ENCODE measurements at regions of chrX and their contacts with region 1.

Region 1: DNA sequence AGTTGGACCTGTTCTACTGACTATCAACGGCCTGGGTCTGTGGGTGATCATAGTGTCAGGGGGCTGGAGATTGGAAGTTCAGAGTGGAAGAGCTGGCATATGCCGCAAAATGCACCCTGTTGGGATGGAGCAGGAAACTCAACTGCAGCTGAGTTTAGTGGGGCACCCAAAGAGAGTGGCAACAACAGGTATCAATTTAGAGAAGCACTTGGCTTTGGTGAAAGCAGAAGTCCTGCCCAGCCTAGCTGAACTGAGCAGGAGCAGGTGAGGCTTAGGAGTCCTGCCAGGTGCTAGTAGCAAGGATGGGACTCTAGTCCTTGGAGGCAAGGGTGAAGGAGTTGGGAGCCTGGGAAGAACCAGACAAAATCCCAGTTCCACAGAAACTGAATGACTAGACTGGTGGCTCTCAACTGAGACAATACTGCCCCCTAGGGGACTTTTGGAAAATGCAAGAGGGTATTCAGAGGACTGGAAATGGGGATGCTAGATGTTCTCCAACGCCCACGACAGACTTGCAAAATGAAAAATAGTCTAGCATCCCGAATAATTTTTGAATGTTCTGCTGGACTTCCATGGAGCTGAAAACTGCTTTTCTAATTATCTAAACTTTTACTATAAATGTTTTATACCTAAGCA is 49.4 kb downstream of the RTL9 start:
- DNase-seq: peak in 1 of 2 donors; percentile 23
- ATAC-seq: peak; percentile 83 to 84
- H3K4me3 ChIP-seq: no peak overlapping the region
- H3K27ac ChIP-seq: no peak overlapping the region
- H3K4me1 ChIP-seq: no peaks in the 10 kb centered on the region
- H3K27me3 ChIP-seq: no peaks in the 10 kb centered on the region
- CTCF ChIP-seq: peak; percentile 33 to 80 (median 69)
- POLR2A ChIP-seq: no peak

Region 2: DNA sequence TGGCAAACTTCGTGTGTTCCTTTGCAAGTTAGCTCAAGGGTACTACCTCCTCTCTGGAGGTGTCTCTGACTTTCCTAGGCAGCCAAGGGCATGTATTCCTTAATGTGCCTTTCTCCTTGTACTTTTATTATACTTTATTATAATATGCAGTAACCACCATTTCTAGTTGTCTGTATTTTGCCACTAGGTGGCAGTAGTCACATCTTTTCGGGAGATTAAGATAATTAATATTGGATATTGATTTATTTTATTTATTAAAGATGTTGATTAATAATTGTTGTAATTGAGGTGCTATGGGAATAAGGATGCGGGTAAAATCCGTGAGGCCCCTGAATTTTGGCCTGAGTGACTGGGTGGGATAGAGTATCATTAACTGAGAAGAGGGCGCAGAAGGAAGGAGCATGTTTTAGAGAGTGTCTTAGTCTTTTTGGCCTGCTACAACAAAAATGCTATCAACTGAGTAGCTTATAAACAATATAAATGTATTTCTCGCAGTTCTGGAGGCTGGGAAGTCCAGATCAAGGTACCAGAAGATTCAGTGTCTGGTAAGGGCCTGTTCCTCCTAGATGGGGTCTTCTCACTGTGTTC is 251.8 kb before region 1 on chrX:
- in situ Hi-C with region 1: loop called (anchors 5 to 10 kb)
- intact Hi-C with region 1: loop called (anchors 1 kb)
- DNase-seq: no peak
- ATAC-seq: no peak
- H3K4me3 ChIP-seq: no peak overlapping the region
- H3K27ac ChIP-seq: no peak overlapping the region
- H3K4me1 ChIP-seq: peaks cover 8 to 16% of the 10 kb centered on the region in 2 donors
- H3K27me3 ChIP-seq: no peaks in the 10 kb centered on the region
- CTCF ChIP-seq: peak in 2 of 5 experiments; percentile 27 to 66
- POLR2A ChIP-seq: no peak

Region 3: DNA sequence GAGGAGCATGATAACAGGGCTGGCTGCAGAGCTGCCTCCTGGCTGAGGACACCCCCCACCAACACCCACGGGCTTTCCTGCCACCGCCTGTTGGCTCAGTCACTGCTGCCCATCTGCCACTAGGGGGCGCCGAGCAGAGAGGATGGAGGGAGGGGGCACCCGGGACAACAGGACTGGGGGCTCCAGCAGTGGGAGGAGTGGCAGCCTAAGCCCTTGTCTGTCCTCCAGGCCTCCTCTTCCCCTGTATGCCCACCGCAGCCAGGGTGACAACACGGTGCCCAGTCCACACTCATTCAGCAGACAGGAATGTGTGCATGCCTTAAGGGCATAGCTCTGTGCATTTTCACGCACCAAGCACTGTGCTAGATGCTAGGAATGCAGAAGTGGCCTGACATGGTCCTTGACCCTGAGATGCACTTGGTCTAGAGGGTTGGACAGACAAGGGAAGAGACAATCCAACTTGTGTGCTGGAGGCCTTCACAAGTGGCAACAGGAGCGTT is 240.0 kb before region 1 on chrX:
- in situ Hi-C with region 1: loop called in 1 of 4 experiments (anchors 5 kb)
- intact Hi-C with region 1: no loop called
- DNase-seq: no peak
- ATAC-seq: no peak
- H3K4me3 ChIP-seq: no peak overlapping the region
- H3K27ac ChIP-seq: no peak overlapping the region
- H3K4me1 ChIP-seq: peaks cover 0 to 8% of the 10 kb centered on the region in 2 donors
- H3K27me3 ChIP-seq: no peaks in the 10 kb centered on the region
- CTCF ChIP-seq: peak in 4 of 5 experiments; percentile 13 to 57 (median 40)
- POLR2A ChIP-seq: no peak

Region 4: GRCh38 chrX:110317820-110318658 is 90.0 kb before region 1 on chrX and contains the start of gene AMMECR1:
- in situ Hi-C with region 1: no loop called
- intact Hi-C with region 1: loop called (anchors 5 kb)
- DNase-seq: peak; percentile 44 to 72
- ATAC-seq: peak; percentile 90
- H3K4me3 ChIP-seq: peak within 1 kb of the TSS; percentile 67 to 85 (median 76)
- H3K27ac ChIP-seq: peak within 1 kb of the TSS; percentile 83 to 92 (median 88)
- H3K4me1 ChIP-seq: peaks cover 6 to 7% of the 10 kb centered on the region in 2 donors
- H3K27me3 ChIP-seq: no peaks in the 10 kb centered on the region
- CTCF ChIP-seq: peak in 1 of 5 experiments; percentile 3
- POLR2A ChIP-seq: peak; percentile 46 to 59
- total RNA-seq, gene AMMECR1: 1.2 to 2.6 (median 1.9) TPM

Region 5: DNA sequence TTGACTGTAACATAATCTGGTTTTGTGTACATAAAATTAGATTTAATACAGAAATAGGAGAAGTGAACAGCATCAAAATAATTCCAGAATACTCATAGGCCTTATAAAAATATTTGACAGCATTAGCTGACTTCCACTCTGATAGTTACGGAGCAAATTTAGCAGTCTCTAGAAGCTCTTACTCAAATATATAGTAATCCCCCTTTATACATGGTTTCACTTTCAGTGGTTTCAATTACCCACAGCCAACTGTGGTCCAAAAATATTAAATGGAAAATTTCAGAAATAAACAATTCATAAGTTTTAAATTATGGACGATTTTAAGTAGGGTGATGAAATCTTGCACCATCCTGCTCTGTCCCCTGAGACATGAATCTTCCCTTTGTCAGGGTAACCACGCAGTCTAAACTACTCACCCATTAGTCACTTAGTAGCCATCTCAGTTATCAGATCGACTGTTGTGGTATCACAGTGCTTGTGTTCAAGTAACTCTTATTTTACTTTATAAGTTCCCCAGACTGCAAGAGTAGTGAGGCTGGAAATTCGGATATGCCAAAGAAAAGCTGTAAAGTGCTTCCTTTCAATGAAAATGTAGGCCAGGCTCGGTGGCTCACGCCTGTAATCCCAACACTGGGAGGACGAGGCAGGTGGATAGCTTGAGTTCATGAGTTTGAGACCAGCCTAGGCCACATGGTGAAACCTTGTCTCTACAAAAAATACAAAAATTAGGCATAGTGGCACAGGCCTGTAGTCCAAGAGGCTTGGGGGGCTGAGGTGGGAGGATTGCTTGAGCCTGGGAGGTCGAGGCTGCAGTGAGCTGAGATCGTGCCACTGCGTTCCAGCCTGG is 66.6 kb before region 1 on chrX:
- in situ Hi-C with region 1: no loop called
- intact Hi-C with region 1: loop called (anchors 10 kb)
- DNase-seq: peak in 1 of 2 donors; percentile 17
- ATAC-seq: peak in 1 of 2 donors; percentile 56
- H3K4me3 ChIP-seq: no peak overlapping the region
- H3K27ac ChIP-seq: no peak overlapping the region
- H3K4me1 ChIP-seq: no peaks in the 10 kb centered on the region
- H3K27me3 ChIP-seq: no peaks in the 10 kb centered on the region
- CTCF ChIP-seq: no peak
- POLR2A ChIP-seq: no peak

Measured in gastrocnemius medialis (tissue), 4 donors.